Activated CD4-positive, alpha-beta T cell treated with anti-CD3 and anti-CD28 coated beads, Interleukin-2, amount 10 ng/mL, durations not matched to agents 24 days and 14 days (primary cell): ENCODE measurements at regions of chr15 and their contacts with region 1.

Region 1: GRCh38 chr15:38474155-38474757 is 20.3 kb downstream of the FAM98B start:
- DNase-seq: peak; percentile 85
- H3K4me3 Mint-ChIP-seq: no peak overlapping the region
- H3K27ac Mint-ChIP-seq: no peak overlapping the region
- H3K4me1 Mint-ChIP-seq: peaks cover 13% of the 10 kb centered on the region
- H3K27me3 Mint-ChIP-seq: no peaks in the 10 kb centered on the region

Region 2: DNA sequence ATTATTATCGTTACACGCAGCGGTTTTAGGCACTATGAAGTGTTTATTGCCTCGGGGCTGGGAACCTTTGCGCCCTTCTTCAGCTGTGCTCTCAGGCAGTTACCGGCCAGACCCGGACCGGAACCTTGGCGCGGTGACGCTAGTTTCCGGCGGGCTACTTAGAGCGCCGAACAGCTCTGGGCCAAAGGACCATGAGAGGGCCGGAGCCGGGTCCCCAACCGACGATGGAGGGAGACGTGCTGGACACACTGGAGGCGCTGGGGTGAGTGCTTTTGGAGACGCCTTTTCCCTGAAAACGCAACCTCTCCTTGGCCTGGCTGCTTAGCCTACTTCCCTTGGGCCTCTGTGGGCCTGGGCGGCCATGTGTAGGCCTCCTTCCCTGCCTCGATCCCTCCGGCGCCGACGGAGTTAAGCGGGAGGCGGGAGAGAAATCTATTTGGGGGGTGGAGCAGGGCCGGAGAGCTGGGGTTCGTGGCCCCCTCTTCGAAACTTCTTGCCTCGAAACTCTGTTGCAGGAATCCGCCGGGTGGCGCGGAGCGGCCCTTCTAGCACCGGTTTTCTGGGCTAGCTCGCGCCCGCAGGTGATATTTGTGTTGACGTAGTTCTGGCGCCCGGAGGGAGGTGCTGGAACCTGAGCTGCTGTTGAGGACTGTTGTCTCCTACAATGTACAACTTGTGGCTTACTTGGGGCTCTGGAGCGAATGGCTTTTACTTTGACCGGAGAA is 20.1 kb before region 1 on chr15 and contains the start of gene FAM98B:
- intact Hi-C with region 1: loop called (anchors 2 kb)
- DNase-seq: peak; percentile 97
- H3K4me3 Mint-ChIP-seq: peak within 1 kb of the TSS; percentile 94
- H3K27ac Mint-ChIP-seq: peak within 1 kb of the TSS; percentile 95
- H3K4me1 Mint-ChIP-seq: peaks cover 27% of the 10 kb centered on the region
- H3K27me3 Mint-ChIP-seq: peaks cover 27% of the 10 kb centered on the region
- total RNA-seq, gene FAM98B: 64.0 and 71.6 TPM in 2 replicates

Region 3: DNA sequence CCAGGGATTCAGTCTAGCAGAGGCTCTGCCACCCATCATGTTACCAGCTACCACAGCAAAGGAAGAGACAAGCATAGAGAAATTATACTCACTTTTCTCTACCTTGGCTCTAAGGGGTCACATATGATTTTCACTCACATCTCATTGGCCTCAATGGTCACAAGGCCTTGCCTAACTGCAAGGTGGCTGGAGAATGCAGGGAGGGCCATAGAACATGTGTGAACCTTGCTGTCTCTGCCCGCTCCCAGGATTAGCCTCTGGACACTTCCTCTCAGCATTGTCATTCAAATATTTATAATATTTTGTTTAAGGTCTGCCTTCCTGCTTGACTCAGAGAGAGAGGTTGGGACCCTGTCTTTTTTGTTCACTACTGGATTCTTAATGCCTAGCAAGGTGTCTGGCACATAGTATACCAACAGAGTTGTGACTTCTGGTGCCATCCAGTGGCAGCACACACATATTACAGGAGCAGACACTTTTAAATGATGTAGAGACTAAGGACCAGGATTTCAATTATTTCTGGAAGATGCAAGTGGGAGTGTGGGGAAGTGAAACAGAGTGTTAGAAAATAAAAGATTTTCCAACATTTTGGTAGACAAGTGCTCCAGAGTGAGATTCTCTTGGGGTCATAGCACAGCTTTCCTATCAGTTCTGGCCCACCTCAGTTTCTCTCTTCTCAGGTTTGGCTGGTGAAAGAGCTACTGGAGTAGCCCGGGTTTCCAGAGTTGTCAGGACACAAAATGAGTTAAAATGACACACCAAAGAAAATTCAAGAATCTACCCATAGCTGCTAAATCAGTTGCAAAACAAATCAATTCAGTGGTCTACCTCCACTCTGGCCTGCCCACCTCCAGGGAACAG is 209.4 kb after region 1 on chr15:
- intact Hi-C with region 1: loop called (anchors 1 kb)
- DNase-seq: peak; percentile 91
- H3K4me3 Mint-ChIP-seq: peak overlapping the region; percentile 55
- H3K27ac Mint-ChIP-seq: peak overlapping the region; percentile 97
- H3K4me1 Mint-ChIP-seq: peaks cover 73% of the 10 kb centered on the region
- H3K27me3 Mint-ChIP-seq: no peaks in the 10 kb centered on the region

Region 4: DNA sequence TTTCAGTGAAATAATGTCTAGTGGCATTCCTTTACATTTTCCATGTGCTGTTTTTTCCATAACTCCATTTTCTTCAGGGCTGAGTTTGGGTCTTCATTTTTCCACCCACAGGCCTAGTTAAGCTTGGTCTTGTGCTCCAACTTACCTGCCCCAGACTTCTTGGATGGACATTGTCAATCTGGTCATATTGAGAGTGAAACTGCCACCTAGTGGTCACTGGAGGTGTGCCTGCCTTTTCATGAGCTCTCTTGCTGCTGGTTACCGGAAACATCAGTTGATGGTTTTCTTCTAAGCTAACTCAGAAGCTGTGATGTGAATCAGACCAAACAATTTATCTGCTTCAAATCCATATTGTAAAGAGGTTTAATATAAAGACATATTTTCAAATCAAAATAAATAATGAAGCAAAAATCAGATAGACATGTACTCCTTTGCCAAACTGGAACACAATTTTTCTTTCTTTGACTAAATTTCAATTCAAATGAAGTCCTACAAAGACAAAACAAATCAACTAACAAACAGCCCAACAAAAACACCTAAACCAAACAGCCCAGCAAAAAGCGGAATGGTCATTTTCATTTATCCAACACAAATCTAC is 225.5 kb after region 1 on chr15:
- intact Hi-C with region 1: loop called (anchors 1 kb)
- DNase-seq: peak; percentile 92
- H3K4me3 Mint-ChIP-seq: no peak overlapping the region
- H3K27ac Mint-ChIP-seq: peak overlapping the region; percentile 65
- H3K4me1 Mint-ChIP-seq: peaks cover 57% of the 10 kb centered on the region
- H3K27me3 Mint-ChIP-seq: no peaks in the 10 kb centered on the region